Activated B cell treated with CpG ODN at 0.5 μM for 24 hours (primary cell): ENCODE measurements at regions of chr14 and their contacts with region 1.

Region 1: GRCh38 chr14:20613094-20614037 is 22.2 kb upstream of the RNASE12 start:
- DNase-seq: peak; percentile 62
- ATAC-seq: peak; percentile 72
- H3K4me3 Mint-ChIP-seq: no peak overlapping the region
- H3K27ac Mint-ChIP-seq: no peak overlapping the region
- H3K4me1 Mint-ChIP-seq: peaks cover 12% of the 10 kb centered on the region
- H3K27me3 Mint-ChIP-seq: no peaks in the 10 kb centered on the region
- CTCF ChIP-seq: no peak

Region 2: GRCh38 chr14:20343092-20343861 is 270.1 kb before region 1 on chr14 and contains the start of gene PARP2:
- CTCF ChIA-PET with region 1: interaction called, 9 read pairs
- POLR2A ChIA-PET with region 1: interaction called, 33 read pairs
- intact Hi-C with region 1: loop called (anchors 1 kb)
- DNase-seq: peak; percentile 87
- ATAC-seq: peak; percentile 87
- H3K4me3 Mint-ChIP-seq: peak within 1 kb of the TSS; percentile 98
- H3K27ac Mint-ChIP-seq: peak within 1 kb of the TSS; percentile 97
- H3K4me1 Mint-ChIP-seq: peaks cover 12% of the 10 kb centered on the region
- H3K27me3 Mint-ChIP-seq: no peaks in the 10 kb centered on the region
- CTCF ChIP-seq: no peak
- total RNA-seq, gene PARP2: 17.1 and 19.5 TPM in 2 replicates

Region 3: DNA sequence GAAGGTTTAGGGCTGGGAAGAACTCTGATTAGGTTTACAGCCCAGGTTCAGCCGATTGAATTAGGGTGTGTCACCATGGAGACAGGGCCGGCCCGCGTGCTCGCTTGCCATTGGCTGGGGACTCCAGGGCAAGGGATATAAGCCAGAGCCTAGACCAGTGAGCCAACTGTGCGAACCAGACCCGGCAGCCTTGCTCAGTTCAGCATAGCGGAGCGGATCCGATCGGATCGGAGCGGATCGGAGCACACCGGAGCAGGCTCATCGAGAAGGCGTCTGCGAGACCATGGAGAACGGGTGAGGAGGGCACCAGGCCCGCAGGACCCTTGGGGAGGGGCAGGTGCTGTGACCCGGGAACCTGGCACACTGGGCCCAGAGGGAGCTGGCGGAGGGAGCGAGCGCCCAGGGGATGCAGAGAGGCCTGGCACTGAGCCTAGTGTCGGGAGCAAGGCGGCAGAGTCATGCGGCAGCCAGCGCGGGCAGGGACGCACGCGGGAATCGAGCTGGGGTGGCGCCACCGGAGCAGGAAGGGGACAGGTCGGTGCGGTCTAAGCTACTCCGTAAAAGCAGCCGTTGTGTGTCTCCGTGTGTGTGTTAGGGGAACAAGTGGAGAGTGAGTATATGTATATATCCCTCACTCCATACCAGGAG is 144.0 kb before region 1 on chr14 and contains the start of gene PNP:
- CTCF ChIA-PET with region 1: no interaction called
- POLR2A ChIA-PET with region 1: interaction called, 13 read pairs
- intact Hi-C with region 1: no loop called
- DNase-seq: peak; percentile 78
- ATAC-seq: peak; percentile 89
- H3K4me3 Mint-ChIP-seq: peak within 1 kb of the TSS; percentile 95
- H3K27ac Mint-ChIP-seq: peak within 1 kb of the TSS; percentile 93
- H3K4me1 Mint-ChIP-seq: peaks cover 42% of the 10 kb centered on the region
- H3K27me3 Mint-ChIP-seq: no peaks in the 10 kb centered on the region
- CTCF ChIP-seq: no peak
- total RNA-seq, gene PNP: 87.2 and 88.0 TPM in 2 replicates

Region 4: DNA sequence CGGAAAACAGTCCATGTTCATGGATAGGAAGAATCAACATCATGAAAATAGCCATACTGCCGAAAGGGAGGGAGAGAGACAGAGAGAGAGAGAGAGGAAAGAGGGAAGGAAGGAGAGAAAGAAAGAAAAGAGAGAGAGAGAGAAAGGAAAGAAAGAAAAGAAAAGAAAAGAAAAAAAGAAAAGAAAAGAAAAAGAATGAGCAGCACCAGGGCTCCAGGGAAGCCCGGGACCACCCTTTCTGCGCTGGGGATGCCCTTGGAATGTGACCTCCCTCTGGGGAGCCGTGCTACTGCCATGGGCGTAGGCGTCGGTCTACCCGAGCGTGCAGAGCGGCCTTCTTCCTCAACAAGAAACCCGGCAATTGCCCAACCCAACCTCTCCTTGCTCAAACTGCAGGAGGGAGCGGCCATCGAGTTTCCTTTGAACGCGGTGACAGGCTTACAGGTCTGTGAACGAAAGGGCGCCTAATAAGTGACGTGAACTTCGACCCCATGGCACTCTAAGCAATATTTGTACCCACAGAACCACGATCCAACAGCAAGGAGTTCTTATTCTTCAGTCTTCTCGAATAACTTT is 11.2 kb after region 1 on chr14:
- CTCF ChIA-PET with region 1: interaction called, 43 read pairs
- POLR2A ChIA-PET with region 1: interaction called, 4 read pairs
- intact Hi-C with region 1: loop called (anchors 1 kb)
- DNase-seq: no peak
- ATAC-seq: peak; percentile 69
- H3K4me3 Mint-ChIP-seq: peak overlapping the region; percentile 79
- H3K27ac Mint-ChIP-seq: peak overlapping the region; percentile 89
- H3K4me1 Mint-ChIP-seq: peaks cover 70% of the 10 kb centered on the region
- H3K27me3 Mint-ChIP-seq: peaks cover 11% of the 10 kb centered on the region
- CTCF ChIP-seq: no peak

Region 5: DNA sequence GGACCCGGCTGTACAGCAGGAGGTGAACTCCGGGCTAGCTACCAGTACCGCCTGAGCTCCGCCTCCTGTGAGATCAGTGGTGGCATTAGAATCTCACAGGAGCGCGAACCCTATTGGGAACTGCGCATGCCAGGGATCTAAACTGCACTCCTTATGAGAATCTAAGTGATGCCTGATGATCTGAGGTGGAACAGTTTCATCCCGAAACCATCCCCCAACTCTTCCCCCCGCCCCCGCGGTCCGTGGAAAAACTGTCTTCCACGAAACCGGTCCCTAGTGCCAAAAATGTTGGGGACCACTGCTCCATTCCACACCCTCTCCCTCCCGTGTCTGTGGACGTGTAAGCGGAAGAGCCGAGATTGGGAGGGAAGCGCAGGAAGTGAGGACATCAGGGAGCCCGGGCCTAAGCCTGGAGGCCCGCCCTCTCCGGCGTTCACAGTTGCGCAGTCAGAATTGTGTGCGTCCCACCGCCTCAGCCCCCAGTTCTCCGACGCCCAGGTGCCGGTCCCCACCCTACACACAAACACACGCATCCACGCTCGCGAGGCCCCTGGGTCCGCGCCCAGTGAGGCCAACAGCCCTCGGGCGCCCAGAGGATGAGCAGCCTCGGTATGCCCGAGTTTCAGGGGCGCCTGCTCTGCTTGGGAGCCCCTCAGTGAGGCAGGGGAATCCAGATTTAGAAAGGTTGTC is 69.2 kb after region 1 on chr14:
- CTCF ChIA-PET with region 1: interaction called, 30 read pairs
- POLR2A ChIA-PET with region 1: interaction called, 76 read pairs
- intact Hi-C with region 1: loop called (anchors 1 kb)
- DNase-seq: peak; percentile 70
- ATAC-seq: peak; percentile 59
- H3K4me3 Mint-ChIP-seq: no peak overlapping the region
- H3K27ac Mint-ChIP-seq: no peak overlapping the region
- H3K4me1 Mint-ChIP-seq: peaks cover 16% of the 10 kb centered on the region
- H3K27me3 Mint-ChIP-seq: no peaks in the 10 kb centered on the region
- CTCF ChIP-seq: no peak

Region 6: DNA sequence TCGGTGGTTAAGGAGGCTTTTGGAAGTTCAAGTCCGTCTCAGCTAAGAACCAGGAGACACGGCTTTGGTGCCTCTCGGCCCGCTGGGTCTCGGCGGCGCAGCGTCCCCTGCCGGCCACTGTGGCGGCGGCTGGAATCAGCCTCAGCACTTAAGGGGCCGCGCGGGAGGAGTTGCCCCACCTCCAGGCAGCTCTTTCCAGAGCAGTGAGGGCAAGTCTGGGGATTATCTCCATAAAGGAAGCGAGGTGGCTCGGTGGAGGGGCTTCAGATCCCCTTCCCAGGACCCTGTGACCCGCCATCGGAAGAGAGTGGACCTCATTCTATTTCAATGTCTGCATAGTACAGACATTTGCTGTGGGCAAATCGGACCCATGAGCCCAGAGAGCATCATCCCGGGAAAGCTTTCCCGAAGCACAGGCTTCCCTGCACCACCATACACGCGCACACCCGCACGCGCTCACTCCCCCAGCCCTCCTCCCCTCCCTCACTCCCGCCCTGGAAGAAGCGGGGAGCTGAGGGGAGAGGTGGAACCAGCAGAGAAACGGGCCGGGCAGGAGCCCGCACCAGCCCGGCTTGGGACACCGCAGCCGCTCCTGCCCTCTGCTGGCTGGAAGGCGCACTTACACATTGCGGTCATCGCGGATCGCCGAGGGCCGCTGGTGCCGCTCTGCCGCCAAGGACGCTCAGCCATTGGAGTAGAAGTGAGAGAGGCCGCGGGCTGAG is 357.8 kb after region 1 on chr14:
- CTCF ChIA-PET with region 1: interaction called, 3 read pairs
- POLR2A ChIA-PET with region 1: no interaction called
- intact Hi-C with region 1: loop called (anchors 1 kb)
- DNase-seq: peak; percentile 77
- ATAC-seq: peak; percentile 95
- H3K4me3 Mint-ChIP-seq: peak overlapping the region; percentile 90
- H3K27ac Mint-ChIP-seq: no peak overlapping the region
- H3K4me1 Mint-ChIP-seq: peaks cover 9% of the 10 kb centered on the region
- H3K27me3 Mint-ChIP-seq: peaks cover 50% of the 10 kb centered on the region
- CTCF ChIP-seq: no peak